Activated CD8-positive, alpha-beta T cell treated with anti-CD3 and anti-CD28 coated beads for 36 hours (primary cell): ENCODE measurements at regions of chr1 and their contacts with region 1.

Region 1: DNA sequence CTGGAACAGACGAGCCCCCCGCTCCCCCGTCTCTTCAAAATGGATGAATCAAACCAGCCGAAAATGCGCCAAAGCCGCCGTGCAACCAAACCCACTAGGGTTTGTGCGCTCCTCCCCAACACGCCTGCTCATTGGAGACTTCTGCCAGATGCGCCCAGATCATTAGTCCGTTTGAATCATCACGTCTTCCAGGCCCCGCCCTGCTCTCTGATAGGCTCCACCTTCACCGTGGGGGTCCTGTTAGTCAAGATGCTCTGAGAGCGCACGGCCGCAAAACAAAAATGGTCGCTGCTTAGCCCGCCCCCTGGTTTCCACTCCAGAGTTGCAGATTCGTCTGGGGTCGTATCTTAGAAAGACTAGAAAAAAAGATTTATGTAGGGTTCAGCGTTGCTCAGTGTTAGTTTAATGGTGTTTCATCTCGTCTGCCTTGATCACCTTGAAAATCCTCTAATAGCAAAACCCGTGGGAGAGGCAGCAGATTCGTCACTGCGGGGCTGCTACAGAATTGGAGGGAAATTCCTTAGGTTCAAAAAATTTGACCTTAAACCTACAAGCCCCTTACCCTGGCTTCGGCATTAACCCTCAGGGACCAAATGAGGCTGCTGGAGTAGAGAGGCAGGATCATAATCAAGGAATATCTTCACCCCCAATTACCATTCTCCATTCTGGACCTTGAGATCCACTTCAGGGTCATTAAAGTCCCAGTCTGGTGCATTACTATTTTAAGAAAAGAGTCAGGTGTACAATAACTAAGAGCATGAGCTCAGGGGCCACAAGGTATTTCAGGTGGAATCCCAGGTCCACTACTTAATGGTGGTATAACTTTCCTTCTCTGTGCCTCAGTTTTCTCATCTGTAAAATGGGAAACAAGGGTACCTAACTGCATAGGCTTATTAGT is at the start of gene NUCKS1:
- DNase-seq: peak; percentile 99
- ATAC-seq: peak; percentile 79
- H3K4me3 Mint-ChIP-seq: peak within 1 kb of the TSS; percentile 87
- H3K27ac Mint-ChIP-seq: peak within 1 kb of the TSS; percentile 99
- H3K4me1 Mint-ChIP-seq: peaks cover 33% of the 10 kb centered on the region
- H3K27me3 Mint-ChIP-seq: no peaks in the 10 kb centered on the region
- CTCF ChIP-seq: no peak
- total RNA-seq, gene NUCKS1: 145 to 177 TPM

Region 2: GRCh38 chr1:205664376-205665108 is 85.8 kb before region 1 on chr1:
- CTCF ChIA-PET with region 1: no interaction called
- POLR2A ChIA-PET with region 1: no interaction called
- intact Hi-C with region 1: no loop called
- DNase-seq: no peak
- ATAC-seq: no peak
- H3K4me3 Mint-ChIP-seq: no peak overlapping the region
- H3K27ac Mint-ChIP-seq: no peak overlapping the region
- H3K4me1 Mint-ChIP-seq: peaks cover 5% of the 10 kb centered on the region
- H3K27me3 Mint-ChIP-seq: peaks cover 4% of the 10 kb centered on the region
- CTCF ChIP-seq: no peak

Region 3: GRCh38 chr1:205729945-205730610 is 20.3 kb before region 1 on chr1:
- CTCF ChIA-PET with region 1: interaction called, 6 read pairs
- POLR2A ChIA-PET with region 1: interaction called, 17 read pairs
- intact Hi-C with region 1: no loop called
- DNase-seq: no peak
- ATAC-seq: no peak
- H3K4me3 Mint-ChIP-seq: no peak overlapping the region
- H3K27ac Mint-ChIP-seq: no peak overlapping the region
- H3K4me1 Mint-ChIP-seq: peaks cover 42% of the 10 kb centered on the region
- H3K27me3 Mint-ChIP-seq: no peaks in the 10 kb centered on the region
- CTCF ChIP-seq: no peak

Region 4: GRCh38 chr1:205739348-205740160 is 10.8 kb before region 1 on chr1:
- CTCF ChIA-PET with region 1: no interaction called
- POLR2A ChIA-PET with region 1: interaction called, 18 read pairs
- intact Hi-C with region 1: no loop called
- DNase-seq: no peak
- ATAC-seq: no peak
- H3K4me3 Mint-ChIP-seq: no peak overlapping the region
- H3K27ac Mint-ChIP-seq: no peak overlapping the region
- H3K4me1 Mint-ChIP-seq: peaks cover 53% of the 10 kb centered on the region
- H3K27me3 Mint-ChIP-seq: no peaks in the 10 kb centered on the region
- CTCF ChIP-seq: no peak

Region 5: DNA sequence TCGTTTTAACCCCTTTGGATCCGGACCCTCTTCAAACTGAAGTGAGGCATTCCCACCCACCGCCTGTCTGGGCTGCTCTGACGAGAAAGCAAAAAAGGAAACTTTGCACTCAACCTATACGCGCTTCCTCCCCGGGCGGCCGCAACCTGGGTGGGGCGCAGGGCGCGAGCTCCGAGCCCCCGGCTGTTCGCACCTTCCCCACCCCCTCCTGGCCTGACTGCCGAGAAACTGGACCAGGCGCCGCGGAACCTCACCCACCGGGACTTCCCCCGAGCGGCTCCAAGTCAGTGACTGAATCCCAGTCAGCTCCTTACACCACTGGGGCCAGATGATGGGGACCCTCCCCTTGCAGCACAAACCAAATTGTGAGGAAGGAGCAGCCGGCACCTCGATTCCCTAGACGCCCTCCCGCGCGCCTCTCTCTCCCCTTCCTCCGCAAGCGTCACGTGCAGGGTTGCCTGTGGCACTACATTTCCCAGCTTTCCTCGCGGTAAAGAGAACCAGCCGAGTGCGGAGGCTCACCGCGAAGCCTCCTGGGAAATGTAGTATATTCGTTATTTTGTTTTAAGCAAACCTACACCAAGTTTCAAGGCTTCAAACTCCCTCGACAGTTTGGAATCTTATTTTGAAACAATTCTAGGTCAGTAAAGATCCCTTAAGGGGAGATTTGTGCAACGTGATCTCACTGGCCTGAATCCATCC is 24.8 kb after region 1 on chr1 and contains the start of gene RAB29:
- CTCF ChIA-PET with region 1: interaction called, 8 read pairs
- POLR2A ChIA-PET with region 1: interaction called, 61 read pairs
- intact Hi-C with region 1: loop called (anchors 2 kb)
- DNase-seq: peak; percentile 94
- ATAC-seq: peak; percentile 83
- H3K4me3 Mint-ChIP-seq: peak within 1 kb of the TSS; percentile 89
- H3K27ac Mint-ChIP-seq: peak within 1 kb of the TSS; percentile 92
- H3K4me1 Mint-ChIP-seq: peaks cover 53% of the 10 kb centered on the region
- H3K27me3 Mint-ChIP-seq: no peaks in the 10 kb centered on the region
- CTCF ChIP-seq: no peak
- total RNA-seq, gene RAB29: 20.1 to 22.5 TPM